Naive thymus-derived CD8-positive, alpha-beta T cell (primary cell): ENCODE measurements at regions of chr17 and their contacts with region 1.

Region 1: DNA sequence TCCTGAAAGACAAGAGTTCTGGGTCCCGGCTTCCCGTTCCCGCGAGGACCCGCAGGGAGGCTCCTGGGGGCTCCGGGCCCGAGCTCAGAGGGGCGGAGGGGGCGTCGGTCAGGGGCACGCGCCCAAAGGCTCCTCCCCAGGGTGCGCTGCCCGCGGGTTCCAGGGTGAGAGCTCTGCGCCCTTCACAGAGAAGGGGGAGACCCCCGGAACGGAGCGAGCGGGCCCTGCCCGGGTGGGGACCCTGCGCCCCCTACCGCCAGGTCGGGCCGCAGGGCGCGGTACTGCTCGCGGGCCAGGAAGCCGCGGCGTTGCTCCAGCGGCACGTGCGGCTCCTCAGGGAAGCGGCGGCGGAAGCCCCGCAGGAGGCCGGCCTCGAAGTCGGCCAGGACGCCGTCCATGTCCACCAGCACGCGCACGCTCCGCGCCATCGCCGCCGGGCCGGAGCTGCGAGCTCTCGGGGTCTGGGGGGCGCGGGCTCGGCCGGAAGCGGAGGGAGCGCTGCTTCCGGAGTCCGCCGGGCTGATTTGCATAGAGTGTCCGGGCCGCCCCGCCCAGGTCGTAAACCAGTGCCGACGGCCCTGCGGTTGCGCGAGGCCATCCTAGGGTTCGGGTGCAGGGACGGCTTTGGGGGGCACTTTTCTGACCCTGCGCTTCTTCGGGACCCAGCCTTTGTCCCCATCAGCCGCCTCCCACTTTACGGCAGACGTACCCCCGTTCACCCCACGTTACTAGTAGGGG is at the start of gene NT5C:
- DNase-seq: peak; percentile 38 to 78 (median 64)
- ATAC-seq: peak; percentile 83 to 86
- H3K4me3 Mint-ChIP-seq: peak within 1 kb of the TSS; percentile 83 to 94 (median 90)
- H3K27ac Mint-ChIP-seq: peak within 1 kb of the TSS; percentile 83 to 94 (median 91)
- H3K4me1 Mint-ChIP-seq: peaks cover 6 to 15% (median 11%) of the 10 kb centered on the region in 4 donors
- H3K27me3 Mint-ChIP-seq: no peaks in the 10 kb centered on the region
- polyA plus RNA-seq, gene NT5C: 46.0 to 53.6 (median 50.6) TPM

Region 2: DNA sequence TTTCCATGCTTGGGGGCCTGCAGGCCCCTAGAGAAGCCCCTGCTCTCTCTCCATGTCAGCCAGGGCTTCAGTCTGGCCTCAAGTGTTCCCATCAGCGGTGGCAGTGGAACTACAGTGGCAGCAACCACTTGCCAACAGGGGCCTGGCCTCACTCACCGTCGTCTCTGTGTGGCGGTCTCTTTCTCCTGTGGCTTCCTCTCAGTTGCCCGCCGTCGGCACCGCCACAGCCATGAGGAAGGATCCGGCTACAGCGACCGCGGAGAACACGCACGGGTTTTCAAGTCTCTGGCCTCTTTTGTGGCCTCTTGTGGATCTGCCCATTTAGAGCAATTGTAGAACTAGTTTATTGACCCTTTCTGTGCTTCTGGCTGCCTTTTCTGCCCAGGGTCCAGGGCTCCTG is 13.1 kb before region 1 on chr17:
- POLR2A ChIA-PET with region 1: interaction called, 49 read pairs
- DNase-seq: no peak
- ATAC-seq: no peak
- H3K4me3 Mint-ChIP-seq: peak overlapping the region in 1 of 10 donors; percentile 58
- H3K27ac Mint-ChIP-seq: peak overlapping the region in 3 of 10 donors; percentile 23 to 72 (median 71)
- H3K4me1 Mint-ChIP-seq: peaks cover 11 to 50% (median 25%) of the 10 kb centered on the region in 4 donors
- H3K27me3 Mint-ChIP-seq: no peaks in the 10 kb centered on the region

Region 3: DNA sequence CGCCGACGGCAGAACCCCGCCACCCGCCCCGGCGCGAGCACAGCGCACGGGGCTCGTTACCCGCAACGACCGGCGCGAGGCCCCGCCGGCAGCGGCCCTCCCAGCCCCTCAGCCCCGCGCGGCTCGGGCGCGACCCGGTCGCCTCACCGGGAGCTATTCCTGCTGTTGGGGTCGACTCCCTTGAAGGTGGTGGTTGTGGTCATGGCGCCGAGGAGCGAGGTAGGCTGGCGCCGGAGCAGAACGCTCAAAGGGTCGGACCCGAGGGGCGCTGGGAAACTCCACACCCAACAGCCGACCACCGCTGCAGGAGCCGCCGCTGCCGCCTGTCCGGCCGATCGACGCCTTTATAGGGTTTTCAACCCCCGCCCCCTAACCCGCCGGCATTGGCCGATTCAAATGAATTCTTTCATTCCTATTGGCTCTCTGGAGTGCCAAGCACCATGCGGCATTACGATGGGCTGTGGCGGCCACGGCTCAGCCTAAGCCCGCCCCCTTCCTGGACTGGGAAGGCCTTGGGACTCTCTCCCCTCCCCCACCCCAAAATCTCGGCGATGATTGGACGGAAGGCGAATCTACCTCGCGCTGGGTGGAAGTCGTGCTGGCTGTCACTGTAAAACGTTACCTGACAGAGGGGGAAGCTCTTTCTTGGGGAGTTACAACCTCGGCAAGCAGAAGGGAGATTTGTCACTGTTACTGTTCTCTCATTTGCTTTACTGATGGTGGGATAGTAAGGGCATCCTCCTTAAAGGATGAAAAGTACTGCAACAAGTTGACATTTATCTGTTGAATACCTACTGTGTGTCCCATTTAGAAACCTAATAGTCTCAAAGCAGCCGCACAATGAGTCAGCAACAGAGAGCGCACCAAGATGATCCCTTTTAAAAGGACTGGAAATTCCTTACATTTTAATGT is 23.0 kb after region 1 on chr17 and contains the start of gene JPT1:
- POLR2A ChIA-PET with region 1: interaction called, 19 read pairs
- DNase-seq: peak; percentile 91 to 99 (median 96)
- ATAC-seq: peak; percentile 97 to 98
- H3K4me3 Mint-ChIP-seq: peak within 1 kb of the TSS; percentile 90 to 94 (median 92)
- H3K27ac Mint-ChIP-seq: peak within 1 kb of the TSS; percentile 79 to 97 (median 91)
- H3K4me1 Mint-ChIP-seq: peaks cover 13 to 37% (median 33%) of the 10 kb centered on the region in 4 donors
- H3K27me3 Mint-ChIP-seq: peaks cover 0 to 2% (median 0%) of the 10 kb centered on the region in 5 donors
- polyA plus RNA-seq, gene JPT1: 68.6 to 76.6 (median 70.7) TPM

Region 4: DNA sequence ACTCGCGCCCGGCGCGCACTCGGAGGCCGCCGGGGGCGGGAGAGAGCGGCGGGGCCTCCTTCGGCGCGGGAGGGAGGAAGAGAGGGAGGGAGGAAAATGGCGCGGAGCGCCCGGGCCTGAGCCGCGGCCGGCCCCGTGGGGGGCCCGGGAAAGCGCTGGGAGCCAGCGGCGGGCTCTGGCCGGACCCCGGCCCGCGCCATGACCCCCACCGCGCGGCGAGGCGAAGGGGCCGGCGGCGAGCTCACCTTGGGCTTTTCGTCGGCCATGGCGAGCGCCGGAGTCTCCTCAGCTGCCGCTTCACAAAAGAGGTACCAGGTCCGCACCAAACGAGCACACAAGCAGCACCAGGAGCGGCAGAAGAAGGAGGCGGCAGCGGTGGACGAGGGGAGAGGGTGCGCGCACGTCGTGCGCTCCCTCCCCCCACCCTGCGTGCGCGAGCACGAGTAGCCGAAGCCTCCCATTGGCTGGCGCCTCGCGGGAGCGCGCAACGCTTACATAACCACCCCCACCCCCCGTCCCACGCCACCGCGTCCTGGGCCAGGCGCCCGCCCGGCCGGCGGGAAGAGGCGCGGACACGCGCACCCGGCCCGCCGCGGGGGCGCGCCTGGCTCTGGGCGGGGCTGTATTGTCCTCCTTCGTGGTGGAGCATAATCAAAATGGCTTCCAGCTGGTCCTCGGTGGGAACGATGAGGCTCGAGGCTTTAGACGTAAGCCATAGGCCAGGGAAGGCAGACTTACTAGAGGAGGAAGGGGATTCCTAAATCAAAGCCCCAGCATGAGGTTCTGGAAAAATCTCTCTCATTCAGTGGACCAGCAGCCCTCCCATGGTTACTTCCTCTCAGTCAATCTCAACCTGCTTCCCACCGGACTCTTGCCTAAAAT is 51.4 kb after region 1 on chr17 and contains the start of gene SUMO2:
- POLR2A ChIA-PET with region 1: interaction called, 13 read pairs
- DNase-seq: peak; percentile 91 to 96 (median 94)
- ATAC-seq: peak; percentile 80 to 84
- H3K4me3 Mint-ChIP-seq: peak within 1 kb of the TSS; percentile 88 to 97 (median 92)
- H3K27ac Mint-ChIP-seq: peak within 1 kb of the TSS; percentile 89 to 99 (median 98)
- H3K4me1 Mint-ChIP-seq: peaks cover 15 to 53% (median 39%) of the 10 kb centered on the region in 4 donors
- H3K27me3 Mint-ChIP-seq: no peaks in the 10 kb centered on the region
- polyA plus RNA-seq, gene SUMO2: 293 to 381 (median 325) TPM